Transverse colon (tissue), 4 donors: ENCODE measurements at regions of chr22 and their contacts with region 1.

Region 1: DNA sequence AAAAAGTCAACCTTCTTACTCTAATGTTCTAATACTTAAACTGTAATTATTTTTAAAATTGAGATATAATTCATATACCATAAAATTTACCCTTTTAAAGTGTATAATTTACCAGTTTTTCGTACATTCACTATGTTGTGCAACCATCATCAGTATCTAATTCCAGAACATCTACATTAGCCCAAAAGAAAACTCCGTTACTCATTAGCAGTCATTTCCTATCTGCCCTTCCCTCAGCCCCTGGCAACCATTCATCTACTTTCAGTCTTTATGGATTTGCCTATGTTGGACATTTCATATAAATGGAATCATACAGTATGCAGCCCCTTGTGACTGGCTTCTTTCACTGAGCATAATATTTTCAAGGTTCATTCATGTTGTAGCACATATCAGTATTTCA is 22.2 kb downstream of the SGSM3 start:
- DNase-seq: no peak
- H3K4me3 ChIP-seq: no peak overlapping the region
- H3K27ac ChIP-seq: no peak overlapping the region
- H3K4me1 ChIP-seq: peaks cover 0 to 48% (median 16%) of the 10 kb centered on the region in 4 donors
- H3K27me3 ChIP-seq: no peaks in the 10 kb centered on the region
- CTCF ChIP-seq: no peak
- EP300 ChIP-seq: no peak
- POLR2A ChIP-seq: no peak

Region 2: GRCh38 chr22:40415531-40416266 is 23.1 kb after region 1 on chr22:
- in situ Hi-C with region 1: no loop called
- intact Hi-C with region 1: loop called (anchors 1 kb)
- DNase-seq: peak; percentile 29
- H3K4me3 ChIP-seq: no peak overlapping the region
- H3K27ac ChIP-seq: peak overlapping the region; percentile 11 to 57 (median 16)
- H3K4me1 ChIP-seq: peaks cover 0 to 14% (median 6%) of the 10 kb centered on the region in 4 donors
- H3K27me3 ChIP-seq: no peaks in the 10 kb centered on the region
- CTCF ChIP-seq: no peak
- EP300 ChIP-seq: no peak
- POLR2A ChIP-seq: no peak